Tibial artery (tissue), 4 donors: ENCODE measurements at regions of chr2 and their contacts with region 1.

Region 1: GRCh38 chr2:237223201-237223861 is 137.6 kb downstream of the COPS8 start:
- DNase-seq: peak; percentile 85 to 94
- H3K4me3 ChIP-seq: no peak overlapping the region
- H3K27ac ChIP-seq: peak overlapping the region; percentile 28 to 59
- H3K4me1 ChIP-seq: peaks cover 0 to 32% (median 21%) of the 10 kb centered on the region in 4 donors
- H3K27me3 ChIP-seq: no peaks in the 10 kb centered on the region
- CTCF ChIP-seq: no peak

Region 2: GRCh38 chr2:237291138-237291792 is 67.9 kb after region 1 on chr2:
- intact Hi-C with region 1: loop called (anchors 2 kb)
- DNase-seq: peak; percentile 96
- H3K4me3 ChIP-seq: peak overlapping the region in 1 of 2 donors; percentile 1
- H3K27ac ChIP-seq: peak overlapping the region; percentile 74 to 78
- H3K4me1 ChIP-seq: peaks cover 0 to 41% (median 13%) of the 10 kb centered on the region in 4 donors
- H3K27me3 ChIP-seq: no peaks in the 10 kb centered on the region
- CTCF ChIP-seq: no peak